H1 (cell line): ENCODE measurements at regions of chr15 and their contacts with region 1.

Region 1: DNA sequence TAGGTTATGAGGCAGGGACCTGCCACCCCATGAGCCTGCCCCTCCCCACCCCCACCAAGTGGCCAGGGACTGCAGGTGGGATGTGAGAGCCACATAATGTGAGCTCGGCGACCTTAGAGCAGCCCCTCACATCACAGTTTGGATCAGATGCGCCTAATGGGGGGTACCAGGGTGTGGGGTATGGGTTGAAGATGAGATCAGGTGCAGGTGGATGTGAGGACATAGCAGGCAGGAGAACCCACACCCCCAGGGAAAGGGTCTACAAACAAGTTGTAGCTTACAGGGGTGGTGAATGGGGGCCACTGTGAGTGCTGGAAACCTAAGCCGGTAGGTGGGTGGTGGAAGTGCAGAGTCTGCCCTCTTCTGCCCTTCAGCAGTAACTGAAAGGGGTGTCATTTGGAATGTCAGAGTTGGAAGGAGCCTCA is 94.0 kb downstream of the CORO2B start:
- DNase-seq: peak in 1 of 2 experiments; percentile 65
- H3K4me3 ChIP-seq: no peak overlapping the region
- H3K27ac ChIP-seq: no peak overlapping the region
- H3K4me1 ChIP-seq: peaks cover 2 to 3% (median 3%) of the 10 kb centered on the region in 4 experiments; a peak in 5 of 7 replicates
- H3K27me3 ChIP-seq: peaks cover 0 to 2% (median 0%) of the 10 kb centered on the region in 4 experiments; a peak in 2 of 7 replicates
- CTCF ChIP-seq: peak; percentile 63 to 86 (median 72)
- EP300 ChIP-seq: no peak
- POLR2A ChIP-seq: no peak
- RAD21 ChIP-seq: peak; percentile 78 to 87

Region 2: DNA sequence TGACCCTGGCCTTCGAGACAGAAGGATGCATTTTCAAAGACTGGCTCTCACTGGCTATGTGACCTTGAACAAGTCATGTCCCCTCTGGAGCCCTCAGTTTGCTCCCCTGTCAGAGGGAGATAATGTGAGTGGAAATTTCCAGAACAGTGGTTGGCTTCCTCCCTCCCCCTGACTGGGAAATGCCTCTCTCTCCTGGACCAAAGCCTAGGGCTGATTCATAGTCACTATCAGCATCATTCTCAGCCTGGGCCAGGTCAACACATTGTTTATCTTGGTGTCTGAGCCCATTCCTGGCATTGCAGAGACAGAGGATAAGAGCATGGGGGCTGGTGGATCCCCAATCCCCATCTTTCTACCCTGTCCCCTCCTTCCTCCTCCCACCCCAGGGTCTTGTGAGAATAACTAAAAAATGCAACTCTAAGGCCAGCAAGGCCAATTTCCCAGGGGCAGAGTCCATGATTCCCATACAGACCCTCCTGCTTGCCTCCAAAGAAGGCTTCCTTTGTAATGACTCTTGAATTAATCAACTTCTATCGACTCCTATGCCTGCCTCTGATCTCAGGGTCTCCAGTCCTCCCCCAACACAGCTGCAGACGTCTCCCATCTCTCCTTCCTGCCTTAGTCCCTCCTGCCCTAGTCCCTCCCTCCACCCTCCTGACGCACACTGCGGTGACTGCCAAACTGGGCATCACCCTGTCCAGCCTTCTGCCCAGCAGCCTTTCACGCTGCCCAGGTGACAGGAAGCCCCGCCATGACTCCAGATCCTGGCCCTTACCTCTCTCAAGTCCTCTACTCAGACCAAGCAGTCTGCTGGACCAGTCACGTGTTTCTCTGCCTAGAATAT is 129.4 kb before region 1 on chr15:
- CTCF ChIA-PET with region 1: interaction called, 721 read pairs
- POLR2A ChIA-PET with region 1: no interaction called
- DNase-seq: no peak
- H3K4me3 ChIP-seq: no peak overlapping the region
- H3K27ac ChIP-seq: no peak overlapping the region
- H3K4me1 ChIP-seq: peaks cover 0 to 3% (median 0%) of the 10 kb centered on the region in 4 experiments; a peak in 2 of 7 replicates
- H3K27me3 ChIP-seq: no peaks in the 10 kb centered on the region
- CTCF ChIP-seq: no peak
- EP300 ChIP-seq: no peak
- POLR2A ChIP-seq: no peak
- RAD21 ChIP-seq: no peak

Region 3: GRCh38 chr15:68574046-68574445 is 98.7 kb before region 1 on chr15:
- CTCF ChIA-PET with region 1: interaction called, 42 read pairs
- POLR2A ChIA-PET with region 1: interaction called, 4 read pairs
- DNase-seq: no peak
- H3K4me3 ChIP-seq: no peak overlapping the region
- H3K27ac ChIP-seq: no peak overlapping the region
- H3K4me1 ChIP-seq: peaks cover 16 to 55% (median 34%) of the 10 kb centered on the region in 4 experiments
- H3K27me3 ChIP-seq: peaks cover 0 to 22% (median 15%) of the 10 kb centered on the region in 4 experiments; a peak in 5 of 7 replicates
- CTCF ChIP-seq: no peak
- EP300 ChIP-seq: no peak
- POLR2A ChIP-seq: no peak
- RAD21 ChIP-seq: no peak

Region 4: DNA sequence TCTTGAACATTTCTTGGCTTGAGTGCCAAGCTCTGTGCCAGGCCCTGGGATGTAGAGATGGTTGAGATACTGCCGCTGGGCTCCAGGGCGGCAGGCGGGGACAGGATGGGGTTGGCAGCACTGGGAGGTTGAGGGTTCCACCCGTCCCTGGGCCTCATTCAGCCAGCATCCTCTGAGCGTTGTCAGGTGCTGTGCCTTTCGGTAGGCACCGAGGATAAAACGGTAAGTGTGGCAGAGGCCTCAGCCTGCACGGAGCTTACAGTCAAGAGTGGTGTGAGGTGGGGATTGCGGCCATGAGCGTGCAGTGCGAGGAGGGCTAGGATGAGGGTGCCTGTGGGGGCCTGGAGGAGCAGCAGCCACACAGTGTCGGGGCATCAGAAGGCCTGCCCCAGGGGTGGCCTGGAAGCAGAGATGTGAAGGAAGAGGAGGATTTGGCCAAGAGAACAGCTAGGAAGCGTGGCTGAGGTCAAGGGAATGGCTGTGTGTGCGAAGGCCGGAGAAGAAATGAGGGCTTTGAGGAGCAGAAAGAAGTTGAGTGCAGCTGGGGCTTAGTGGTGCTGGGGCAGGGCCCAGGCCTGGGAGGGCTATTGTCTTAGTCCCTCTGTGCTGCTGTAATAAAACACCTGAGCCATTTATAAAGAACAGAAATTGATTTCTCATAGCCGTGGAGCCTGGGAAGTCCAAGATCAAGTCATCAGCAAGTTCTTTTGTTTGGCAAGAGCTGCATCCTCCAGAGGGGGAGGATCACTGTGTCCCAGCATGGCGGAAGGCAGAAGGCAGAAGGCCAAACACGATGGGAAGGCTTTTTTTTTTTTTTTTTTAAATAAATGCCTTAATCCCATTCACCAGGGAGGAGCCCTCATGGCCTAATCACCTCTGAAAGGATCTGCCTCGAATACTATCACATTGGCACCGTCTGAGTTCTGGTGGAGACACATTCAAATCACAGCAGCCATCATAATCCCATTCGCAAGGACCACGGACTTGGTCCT is 71.3 kb before region 1 on chr15:
- CTCF ChIA-PET with region 1: interaction called, 11 read pairs
- POLR2A ChIA-PET with region 1: interaction called, 3 read pairs
- DNase-seq: no peak
- H3K4me3 ChIP-seq: no peak overlapping the region
- H3K27ac ChIP-seq: no peak overlapping the region
- H3K4me1 ChIP-seq: peaks cover 5 to 36% (median 24%) of the 10 kb centered on the region in 4 experiments
- H3K27me3 ChIP-seq: no peaks in the 10 kb centered on the region; a peak in 2 of 7 replicates
- CTCF ChIP-seq: no peak
- EP300 ChIP-seq: no peak
- POLR2A ChIP-seq: no peak
- RAD21 ChIP-seq: no peak

Region 5: GRCh38 chr15:68700455-68701123 is 27.8 kb after region 1 on chr15:
- CTCF ChIA-PET with region 1: interaction called, 52 read pairs
- POLR2A ChIA-PET with region 1: no interaction called
- DNase-seq: peak; percentile 13 to 63
- H3K4me3 ChIP-seq: 0 out of 8 replicates have a peak overlapping the region, but pooled peaks of 1 of the 4 experiments have one; percentile 6
- H3K27ac ChIP-seq: no peak overlapping the region
- H3K4me1 ChIP-seq: peaks cover 2 to 17% (median 11%) of the 10 kb centered on the region in 4 experiments
- H3K27me3 ChIP-seq: 0 out of 7 replicates have a peak, but pooled peaks cover 0 to 3% (median 0%) of the 10 kb centered on the region in 4 experiments
- CTCF ChIP-seq: no peak
- EP300 ChIP-seq: no peak
- POLR2A ChIP-seq: no peak
- RAD21 ChIP-seq: no peak

Region 6: DNA sequence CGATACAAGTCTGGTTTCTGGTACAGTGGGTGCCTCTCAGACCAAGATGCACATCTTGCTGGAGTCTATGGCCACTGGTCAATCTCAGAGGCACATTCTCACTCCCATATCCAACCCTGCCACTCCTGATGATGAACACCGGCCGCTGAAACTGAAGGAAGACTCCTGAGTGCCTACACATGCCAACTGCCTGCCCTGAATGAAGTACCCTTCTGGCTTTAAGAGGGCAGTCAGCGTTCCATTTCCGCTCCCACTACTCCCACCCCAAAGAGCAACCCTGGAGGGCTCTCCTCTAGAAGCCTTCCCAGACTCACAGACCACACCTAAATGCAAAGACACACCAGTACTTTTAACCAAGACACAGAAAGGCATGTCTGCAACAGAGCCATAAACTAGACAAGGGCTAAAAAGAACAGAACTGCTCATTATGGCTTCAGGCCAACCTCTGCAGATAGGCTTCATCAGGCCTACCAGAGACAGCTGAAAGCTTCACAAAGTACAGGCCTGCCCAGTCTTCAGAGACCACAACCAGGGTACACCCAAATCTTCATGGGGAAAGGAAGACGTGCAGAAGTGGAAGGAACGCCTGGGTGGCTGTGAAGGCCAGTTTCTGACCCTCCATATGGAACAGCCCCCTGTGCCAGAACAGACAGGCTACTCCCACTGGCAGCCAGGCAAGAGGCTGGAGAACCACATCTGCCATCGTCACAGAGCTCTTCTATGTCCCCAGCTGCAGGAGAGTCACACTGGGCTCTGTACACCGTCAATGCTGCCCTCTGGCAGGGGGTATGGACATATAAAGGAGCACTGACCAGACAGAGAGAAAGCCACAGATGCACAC is 133.6 kb after region 1 on chr15:
- CTCF ChIA-PET with region 1: no interaction called
- POLR2A ChIA-PET with region 1: no interaction called
- DNase-seq: peak in 1 of 2 experiments; percentile 39
- H3K4me3 ChIP-seq: no peak overlapping the region
- H3K27ac ChIP-seq: no peak overlapping the region
- H3K4me1 ChIP-seq: peaks cover 5 to 14% (median 11%) of the 10 kb centered on the region in 4 experiments; a peak in 6 of 7 replicates
- H3K27me3 ChIP-seq: no peaks in the 10 kb centered on the region
- CTCF ChIP-seq: no peak
- EP300 ChIP-seq: no peak
- POLR2A ChIP-seq: no peak
- RAD21 ChIP-seq: no peak

Region 7: GRCh38 chr15:68924866-68925560 is 252.2 kb after region 1 on chr15:
- CTCF ChIA-PET with region 1: interaction called, 49 read pairs
- POLR2A ChIA-PET with region 1: no interaction called
- DNase-seq: peak; percentile 58 to 83
- H3K4me3 ChIP-seq: no peak overlapping the region
- H3K27ac ChIP-seq: no peak overlapping the region
- H3K4me1 ChIP-seq: no peaks in the 10 kb centered on the region
- H3K27me3 ChIP-seq: no peaks in the 10 kb centered on the region
- CTCF ChIP-seq: peak; percentile 84 to 93 (median 92)
- EP300 ChIP-seq: no peak
- POLR2A ChIP-seq: no peak
- RAD21 ChIP-seq: peak; percentile 98 to 100